Tibial artery (tissue), 4 donors: ENCODE measurements at regions of chr9 and their contacts with region 1.

Region 1: DNA sequence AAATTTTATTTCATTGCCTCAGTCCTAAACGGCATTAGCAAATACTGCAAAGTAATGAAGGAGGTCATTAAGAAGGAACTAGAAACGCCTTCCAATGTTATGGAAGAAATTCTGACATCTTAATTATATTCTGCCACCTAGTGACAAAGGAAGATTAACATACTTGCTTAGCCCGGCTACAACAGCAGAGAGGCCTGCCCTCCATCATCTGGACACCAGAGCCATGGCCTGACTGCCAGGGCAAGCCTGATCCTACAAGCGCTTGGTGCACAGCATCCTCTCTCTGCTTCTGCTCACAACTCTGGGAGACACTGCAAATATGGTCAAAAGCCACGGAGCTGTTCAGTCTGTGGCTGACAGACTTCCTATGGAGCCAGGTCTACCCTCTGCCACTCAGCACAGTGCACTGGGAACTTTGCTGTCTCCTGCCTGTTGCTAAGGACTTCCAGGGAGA is 87.3 kb upstream of the SLC44A1 start:
- DNase-seq: peak; percentile 54 to 82
- H3K4me3 ChIP-seq: no peak overlapping the region
- H3K27ac ChIP-seq: peak overlapping the region in 1 of 2 donors; percentile 26
- H3K4me1 ChIP-seq: peaks cover 0 to 5% (median 0%) of the 10 kb centered on the region in 4 donors
- H3K27me3 ChIP-seq: no peaks in the 10 kb centered on the region
- CTCF ChIP-seq: peak; percentile 43 to 64

Region 2: DNA sequence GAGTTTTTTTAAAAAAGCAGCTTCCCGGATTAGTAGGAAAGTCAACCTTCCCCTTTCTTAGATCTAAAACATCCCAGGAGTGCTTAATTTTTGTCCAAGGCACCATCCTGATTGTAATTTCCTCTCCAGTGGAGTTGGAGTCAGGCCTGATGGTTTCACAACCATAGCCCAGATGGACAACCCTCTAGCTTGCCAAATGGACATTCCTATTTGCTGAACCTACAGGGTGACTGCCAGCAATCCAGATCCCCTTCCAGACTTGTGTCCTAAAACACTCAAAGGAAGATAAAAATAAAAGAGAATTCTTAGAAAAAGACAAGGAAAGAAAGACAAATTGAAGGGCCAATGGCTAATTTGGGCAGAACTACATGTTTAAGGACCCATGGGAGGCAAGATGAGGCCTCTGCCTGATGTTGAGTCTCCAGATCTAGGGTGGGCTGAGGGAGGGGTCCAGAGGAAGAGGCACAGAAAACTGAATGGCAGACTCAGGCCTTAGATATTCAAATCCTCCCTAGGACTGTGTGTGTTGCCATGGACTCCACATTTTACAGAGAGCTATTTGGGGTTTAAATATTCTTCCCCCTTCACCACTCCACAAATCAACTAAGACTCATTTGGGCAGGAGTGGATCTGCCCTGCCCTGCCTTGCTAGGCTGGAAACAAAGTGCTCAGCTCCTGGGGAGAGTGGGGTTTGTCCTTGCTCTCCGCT is 48.8 kb after region 1 on chr9:
- intact Hi-C with region 1: loop called (anchors 5 kb)
- DNase-seq: peak; percentile 86 to 88
- H3K4me3 ChIP-seq: no peak overlapping the region
- H3K27ac ChIP-seq: peak overlapping the region; percentile 83 to 86
- H3K4me1 ChIP-seq: peaks cover 0 to 27% (median 13%) of the 10 kb centered on the region in 4 donors
- H3K27me3 ChIP-seq: no peaks in the 10 kb centered on the region
- CTCF ChIP-seq: no peak

Region 3: DNA sequence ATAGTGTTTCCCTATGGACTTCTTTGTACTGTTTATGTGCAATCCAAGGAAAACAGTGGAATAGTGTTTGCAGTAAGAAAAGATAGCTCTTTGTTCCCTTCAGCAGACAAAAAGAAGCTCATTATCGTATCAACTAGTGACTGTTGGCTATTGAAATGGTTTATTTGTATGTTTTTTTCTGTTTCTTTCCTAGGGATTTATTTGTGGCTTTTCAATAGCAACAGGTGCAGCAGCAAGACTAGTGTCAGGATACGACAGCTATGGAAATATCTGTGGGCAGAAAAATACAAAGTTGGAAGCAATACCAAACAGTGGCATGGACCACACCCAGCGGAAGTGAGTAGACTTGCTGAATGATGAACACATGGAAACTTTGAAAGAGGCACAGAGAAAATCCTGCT is 152.4 kb after region 1 on chr9:
- intact Hi-C with region 1: no loop called
- DNase-seq: no peak
- H3K4me3 ChIP-seq: no peak overlapping the region
- H3K27ac ChIP-seq: no peak overlapping the region
- H3K4me1 ChIP-seq: peaks cover 0 to 6% (median 0%) of the 10 kb centered on the region in 4 donors
- H3K27me3 ChIP-seq: no peaks in the 10 kb centered on the region
- CTCF ChIP-seq: no peak

Region 4: DNA sequence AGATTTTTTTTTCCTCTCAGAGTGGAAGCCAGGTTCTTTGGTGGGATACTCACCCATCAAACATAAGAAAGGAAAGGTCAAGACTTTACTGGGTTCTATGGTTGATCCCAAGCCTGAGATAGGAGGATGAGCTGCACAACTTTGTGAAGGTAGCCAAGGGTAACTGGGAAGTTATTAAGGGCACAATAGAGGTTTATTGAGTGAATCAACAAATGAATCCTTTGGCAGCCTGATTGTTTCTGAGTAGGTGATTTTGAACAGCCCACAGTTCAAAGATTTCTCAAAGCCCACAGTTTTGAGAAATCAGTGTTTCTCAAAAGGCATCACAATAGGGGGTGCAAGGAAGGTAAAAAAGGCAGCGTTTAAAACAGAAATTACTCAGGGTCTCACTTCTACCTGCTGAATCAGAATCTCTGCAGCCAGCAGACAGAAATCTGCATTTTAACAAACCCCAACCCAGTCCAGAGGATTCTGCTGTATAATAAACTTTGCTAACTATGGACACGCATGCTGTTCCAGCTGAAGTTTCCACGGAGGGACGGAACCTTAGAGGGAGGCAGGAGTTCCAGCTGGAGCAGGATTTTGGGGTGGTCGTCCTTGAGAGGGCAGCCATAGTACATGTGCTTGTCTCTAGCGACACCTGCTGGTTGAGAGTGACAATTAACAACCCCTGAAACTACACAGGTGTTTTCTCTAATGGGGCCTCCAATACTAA is 257.9 kb after region 1 on chr9:
- intact Hi-C with region 1: loop called (anchors 5 kb)
- DNase-seq: peak in 1 of 2 donors; percentile 43
- H3K4me3 ChIP-seq: no peak overlapping the region
- H3K27ac ChIP-seq: no peak overlapping the region
- H3K4me1 ChIP-seq: peaks cover 0 to 12% (median 6%) of the 10 kb centered on the region in 4 donors
- H3K27me3 ChIP-seq: no peaks in the 10 kb centered on the region
- CTCF ChIP-seq: peak; percentile 77 to 90